T-cell (primary cell): ENCODE measurements at regions of chr2 and their contacts with region 1.

Region 1: DNA sequence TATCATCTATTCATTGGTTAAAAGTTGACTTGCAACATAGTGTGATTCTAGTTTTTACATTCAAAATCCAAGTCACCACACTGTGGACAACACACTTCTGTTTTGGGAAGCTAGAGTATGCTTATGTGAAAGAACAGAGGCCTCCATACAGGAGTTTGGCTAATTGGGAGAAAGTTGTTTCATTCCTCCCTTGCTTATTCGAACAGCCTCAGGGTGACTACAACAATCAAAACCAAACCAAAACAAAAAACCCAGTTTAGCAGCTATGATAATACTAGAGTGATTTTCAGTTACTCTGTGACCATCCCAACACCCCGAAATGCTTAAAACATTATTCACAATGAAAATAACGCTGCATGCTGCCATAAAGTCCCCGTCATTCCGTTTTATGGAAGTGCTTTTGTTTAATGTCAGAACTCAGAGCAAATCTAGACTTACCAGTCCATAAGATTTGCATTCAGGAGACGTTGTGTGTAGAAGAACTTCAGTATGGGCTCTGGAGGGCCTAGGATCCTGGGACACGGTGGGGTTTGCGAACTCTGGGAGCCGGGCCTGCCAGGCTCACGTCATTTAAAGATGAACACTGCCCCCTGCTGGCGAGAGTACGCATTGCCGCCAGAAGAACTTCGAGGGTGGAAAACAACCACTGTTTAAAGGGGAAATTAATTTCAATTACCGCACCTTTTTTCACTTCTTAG is 111.4 kb downstream of the FTCDNL1 start:
- DNase-seq: peak in 31 of 35 experiments; percentile 6 to 64 (median 41)
- ATAC-seq: peak in 1 of 4 experiments; percentile 49
- H3K4me3 ChIP-seq: no peak overlapping the region
- H3K4me3 Mint-ChIP-seq: no peak overlapping the region
- H3K27ac ChIP-seq: no peak overlapping the region
- H3K27ac Mint-ChIP-seq: no peak overlapping the region
- H3K4me1 ChIP-seq: peaks cover 0 to 2% of the 10 kb centered on the region in 2 experiments
- H3K4me1 Mint-ChIP-seq: peaks cover 0 to 6% (median 4%) of the 10 kb centered on the region in 3 donors
- H3K27me3 ChIP-seq: peaks cover 0 to 11% of the 10 kb centered on the region in 2 experiments
- H3K27me3 Mint-ChIP-seq: peaks cover 17 to 24% of the 10 kb centered on the region in 2 donors

Region 2: DNA sequence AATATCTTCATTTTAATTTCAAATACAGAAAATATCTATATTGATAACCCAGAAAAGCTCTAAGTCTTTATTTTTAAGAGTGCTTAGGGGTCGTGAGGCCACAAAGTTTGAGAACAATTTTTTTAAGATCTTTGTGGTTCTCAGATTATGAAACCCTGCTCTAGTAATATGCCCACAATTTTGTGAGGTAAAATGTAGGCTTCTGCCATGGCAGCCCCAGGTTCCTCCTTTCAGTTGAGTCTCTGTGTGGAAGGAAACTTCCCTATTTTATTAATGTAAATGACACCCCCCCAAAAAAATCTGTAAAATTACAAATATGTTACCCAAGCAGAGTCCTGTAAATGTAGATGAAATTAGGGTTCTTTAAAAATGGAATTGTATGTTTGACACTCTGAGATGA is 882.3 kb before region 1 on chr2:
- CTCF ChIA-PET with region 1: no interaction called
- POLR2A ChIA-PET with region 1: no interaction called
- DNase-seq: no peak
- ATAC-seq: no peak
- H3K4me3 ChIP-seq: no peak overlapping the region
- H3K4me3 Mint-ChIP-seq: no peak overlapping the region
- H3K27ac ChIP-seq: no peak overlapping the region
- H3K27ac Mint-ChIP-seq: no peak overlapping the region
- H3K4me1 ChIP-seq: no peaks in the 10 kb centered on the region
- H3K4me1 Mint-ChIP-seq: no peaks in the 10 kb centered on the region
- H3K27me3 ChIP-seq: no peaks in the 10 kb centered on the region
- H3K27me3 Mint-ChIP-seq: no peaks in the 10 kb centered on the region

Region 3: DNA sequence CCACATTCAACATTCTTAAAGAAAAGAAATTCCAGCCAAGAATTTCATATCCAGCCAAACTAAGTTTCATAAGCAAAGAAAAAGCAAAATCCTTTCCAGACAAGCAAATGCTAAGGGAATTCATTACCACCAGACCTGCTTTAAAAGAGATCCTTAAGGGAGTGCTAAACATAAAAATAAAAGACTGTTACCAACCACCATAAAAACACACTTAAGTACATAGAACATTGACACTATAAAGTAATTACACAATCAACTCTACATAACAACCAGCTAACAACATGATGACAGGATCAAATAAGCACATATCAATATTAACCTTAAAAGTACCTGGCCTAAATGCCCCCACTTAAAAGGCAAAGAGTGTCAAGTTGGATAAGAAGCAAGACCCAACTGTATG is 42.1 kb before region 1 on chr2:
- CTCF ChIA-PET with region 1: no interaction called
- POLR2A ChIA-PET with region 1: interaction called in 1 of 2 experiments, 10 read pairs
- DNase-seq: no peak
- ATAC-seq: no peak
- H3K4me3 ChIP-seq: no peak overlapping the region
- H3K4me3 Mint-ChIP-seq: no peak overlapping the region
- H3K27ac ChIP-seq: no peak overlapping the region
- H3K27ac Mint-ChIP-seq: no peak overlapping the region
- H3K4me1 ChIP-seq: no peaks in the 10 kb centered on the region
- H3K4me1 Mint-ChIP-seq: no peaks in the 10 kb centered on the region
- H3K27me3 ChIP-seq: peaks cover 0 to 11% of the 10 kb centered on the region in 2 experiments
- H3K27me3 Mint-ChIP-seq: peaks cover 11 to 21% of the 10 kb centered on the region in 2 donors

Region 4: DNA sequence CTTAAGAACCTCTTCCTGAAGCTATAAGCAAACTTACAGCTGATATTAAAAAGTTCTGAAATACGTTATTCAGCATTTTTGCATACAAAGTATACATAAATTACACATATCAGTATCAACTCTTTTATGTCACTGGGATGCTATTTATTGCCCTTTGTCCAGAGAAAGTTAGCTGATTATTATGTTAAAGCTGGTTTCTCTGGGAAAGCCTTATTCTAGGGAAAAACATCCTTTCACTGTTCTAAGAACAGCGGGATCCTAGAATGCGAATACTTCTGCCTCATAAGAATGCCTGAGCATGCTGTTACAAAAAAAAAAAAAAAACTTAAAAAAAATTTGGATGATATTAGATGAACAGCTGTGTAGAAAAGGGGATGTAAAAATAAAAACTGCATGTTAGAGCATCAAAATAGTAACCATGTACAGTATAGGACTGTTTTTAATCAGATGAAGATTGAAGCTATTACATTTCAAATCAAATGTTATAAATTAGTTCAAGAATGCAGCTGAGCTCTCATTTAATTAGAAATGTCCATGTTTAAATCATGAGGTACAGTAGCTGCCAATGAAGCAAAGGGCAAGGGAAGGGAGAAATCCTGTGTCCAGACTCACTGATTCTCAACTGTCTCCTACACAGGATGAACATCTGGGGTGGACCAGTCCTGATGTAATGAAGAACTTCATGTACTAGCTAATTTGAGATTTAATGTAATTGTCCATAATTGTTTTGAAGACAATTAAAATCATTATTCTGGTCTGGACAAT is 103.3 kb after region 1 on chr2:
- CTCF ChIA-PET with region 1: no interaction called
- POLR2A ChIA-PET with region 1: no interaction called
- DNase-seq: no peak
- ATAC-seq: no peak
- H3K4me3 ChIP-seq: no peak overlapping the region
- H3K4me3 Mint-ChIP-seq: no peak overlapping the region
- H3K27ac ChIP-seq: no peak overlapping the region
- H3K27ac Mint-ChIP-seq: no peak overlapping the region
- H3K4me1 ChIP-seq: no peaks in the 10 kb centered on the region
- H3K4me1 Mint-ChIP-seq: no peaks in the 10 kb centered on the region
- H3K27me3 ChIP-seq: no peaks in the 10 kb centered on the region
- H3K27me3 Mint-ChIP-seq: no peaks in the 10 kb centered on the region

Region 5: GRCh38 chr2:199979832-199980628 is 240.5 kb after region 1 on chr2:
- CTCF ChIA-PET with region 1: no interaction called
- POLR2A ChIA-PET with region 1: no interaction called
- DNase-seq: peak; percentile 38 to 85 (median 76)
- ATAC-seq: peak; percentile 42 to 76 (median 60)
- H3K4me3 ChIP-seq: no peak overlapping the region
- H3K4me3 Mint-ChIP-seq: no peak overlapping the region
- H3K27ac ChIP-seq: no peak overlapping the region
- H3K27ac Mint-ChIP-seq: no peak overlapping the region
- H3K4me1 ChIP-seq: peaks cover 0 to 4% of the 10 kb centered on the region in 2 experiments
- H3K4me1 Mint-ChIP-seq: peaks cover 0 to 5% (median 4%) of the 10 kb centered on the region in 3 donors
- H3K27me3 ChIP-seq: peaks cover 0 to 5% of the 10 kb centered on the region in 2 experiments
- H3K27me3 Mint-ChIP-seq: no peaks in the 10 kb centered on the region

Region 6: GRCh38 chr2:200003444-200003843 is 263.9 kb after region 1 on chr2:
- CTCF ChIA-PET with region 1: no interaction called
- POLR2A ChIA-PET with region 1: no interaction called
- DNase-seq: no peak
- ATAC-seq: no peak
- H3K4me3 ChIP-seq: no peak overlapping the region
- H3K4me3 Mint-ChIP-seq: no peak overlapping the region
- H3K27ac ChIP-seq: no peak overlapping the region
- H3K27ac Mint-ChIP-seq: no peak overlapping the region
- H3K4me1 ChIP-seq: no peaks in the 10 kb centered on the region
- H3K4me1 Mint-ChIP-seq: no peaks in the 10 kb centered on the region
- H3K27me3 ChIP-seq: peaks cover 0 to 2% of the 10 kb centered on the region in 2 experiments
- H3K27me3 Mint-ChIP-seq: peaks cover 0 to 4% of the 10 kb centered on the region in 2 donors